ENCODE measurements at regions of chr12 and their contacts with region 1.

Region 1: GRCh38 chr12:45565590-45565989 is 163.9 kb upstream of the ARID2 start:
- DNase-seq: no peak
- ATAC-seq: no peak
- H3K4me3 Mint-ChIP-seq: no peak overlapping the region
- H3K27ac Mint-ChIP-seq: no peak overlapping the region
- H3K4me1 Mint-ChIP-seq: no peaks in the 10 kb centered on the region
- H3K27me3 Mint-ChIP-seq: no peaks in the 10 kb centered on the region

Region 2: DNA sequence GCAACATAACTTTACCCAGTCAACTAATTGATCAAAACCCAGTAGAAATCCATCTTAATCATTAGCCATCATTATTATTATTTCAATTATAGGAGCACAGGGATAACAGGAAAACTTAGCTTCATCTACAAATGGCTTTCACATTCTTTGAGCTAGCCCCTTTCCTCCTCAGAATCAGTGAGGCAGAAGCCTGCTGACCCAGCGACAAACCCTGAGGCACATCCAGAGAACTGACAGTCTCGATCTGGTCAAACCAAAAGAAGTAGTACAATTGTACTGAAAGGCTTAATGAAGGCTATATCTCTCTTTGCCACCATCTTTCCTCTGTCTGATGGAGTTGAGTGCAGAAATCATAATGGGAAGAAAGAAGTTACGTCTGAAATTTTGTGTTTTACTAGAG is 54.1 kb after region 1 on chr12:
- CTCF ChIA-PET with region 1: no interaction called
- POLR2A ChIA-PET with region 1: no interaction called
- intact Hi-C with region 1: loop called in 1 of 2 experiments (anchors 1 kb)
- DNase-seq: no peak
- ATAC-seq: no peak
- H3K4me3 Mint-ChIP-seq: no peak overlapping the region
- H3K27ac Mint-ChIP-seq: no peak overlapping the region
- H3K4me1 Mint-ChIP-seq: no peaks in the 10 kb centered on the region
- H3K27me3 Mint-ChIP-seq: peaks cover 12% of the 10 kb centered on the region

Measured in activated CD4-positive, alpha-beta T cell treated with anti-CD3 and anti-CD28 coated beads for 36 hours (primary cell).